ENCODE measurements at regions of chr22 and their contacts with region 1.

Region 1: DNA sequence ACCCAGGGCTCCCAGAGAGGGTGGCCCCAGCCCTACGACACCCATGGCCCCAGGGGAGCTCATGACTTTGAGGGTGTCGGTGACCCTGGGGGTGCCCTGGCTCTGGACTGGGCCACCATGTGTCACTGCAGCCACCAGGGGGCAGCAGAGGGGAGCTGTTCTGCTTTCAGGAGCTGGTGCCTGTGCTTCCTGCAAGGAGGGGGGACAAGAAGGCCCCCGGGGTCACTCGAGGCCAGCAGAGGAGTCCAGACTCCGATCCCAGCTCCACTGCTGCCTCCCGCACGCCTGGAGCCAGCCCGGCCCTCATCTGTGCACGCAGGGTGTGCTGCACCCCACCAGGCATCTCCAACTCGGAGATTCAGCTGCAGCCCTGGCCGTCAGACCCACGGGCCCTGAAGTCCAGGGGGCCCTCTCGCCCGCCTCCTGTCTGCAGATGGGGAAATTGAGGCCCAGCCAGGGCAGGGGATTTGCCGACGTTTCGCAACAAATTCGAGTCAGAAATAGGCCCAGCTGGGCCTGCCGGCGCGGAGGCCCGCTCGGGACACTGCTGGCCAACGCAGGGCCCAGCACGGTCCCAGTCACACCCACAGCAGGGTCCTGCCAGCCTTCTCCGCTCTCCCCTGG is 29.5 kb upstream of the WNT7B start:
- DNase-seq: peak; percentile 98

Region 2: GRCh38 chr22:46071451-46072109 is 65.1 kb after region 1 on chr22:
- intact Hi-C with region 1: loop called in 1 of 2 experiments (anchors 5 kb)
- DNase-seq: peak; percentile 98

Region 3: GRCh38 chr22:46114518-46115387 is 108.3 kb after region 1 on chr22:
- intact Hi-C with region 1: loop called (anchors 2 kb)
- DNase-seq: no peak

Measured in posterior vena cava (tissue), 2 donors.